Endothelial cell of umbilical vein (primary cell): ENCODE measurements at regions of chr3 and their contacts with region 1.

Region 1: GRCh38 chr3:139389458-139390209 is at the start of gene COPB2:
- DNase-seq: peak; percentile 100
- H3K4me3 ChIP-seq: peak within 1 kb of the TSS; percentile 60 to 100 (median 98)
- H3K27ac ChIP-seq: peak within 1 kb of the TSS; percentile 86
- H3K4me1 ChIP-seq: peaks cover 5% of the 10 kb centered on the region
- H3K27me3 ChIP-seq: peaks cover 5 to 10% of the 10 kb centered on the region in 2 experiments
- CTCF ChIP-seq: no peak
- POLR2A ChIP-seq: peak; percentile 73
- total RNA-seq, gene COPB2: 137 and 146 TPM in 2 replicates

Region 2: DNA sequence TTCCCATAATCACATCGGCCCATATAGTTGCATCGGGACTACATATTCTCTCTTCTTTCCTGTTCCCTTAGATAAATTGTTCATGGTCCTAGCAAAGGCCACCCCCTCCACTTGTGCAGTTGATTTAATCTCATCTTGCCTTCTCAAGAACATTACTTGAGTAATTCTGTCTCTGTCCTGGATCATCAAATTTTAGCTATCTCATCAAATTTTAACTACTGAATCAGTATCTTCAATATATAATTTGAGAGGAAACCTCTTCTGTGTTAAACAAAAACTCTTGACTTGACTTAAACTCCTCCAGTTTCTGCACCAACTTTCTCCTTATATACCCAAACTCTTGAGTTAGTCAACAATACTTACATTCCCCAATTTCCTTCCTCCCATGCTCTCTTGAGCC is 364.7 kb before region 1 on chr3:
- CTCF ChIA-PET with region 1: no interaction called
- POLR2A ChIA-PET with region 1: no interaction called
- dilution Hi-C with region 1: no loop called
- intact Hi-C with region 1: no loop called
- DNase-seq: no peak
- H3K4me3 ChIP-seq: no peak overlapping the region
- H3K27ac ChIP-seq: no peak overlapping the region
- H3K4me1 ChIP-seq: no peaks in the 10 kb centered on the region
- H3K27me3 ChIP-seq: no peaks in the 10 kb centered on the region
- CTCF ChIP-seq: no peak
- POLR2A ChIP-seq: no peak

Region 3: DNA sequence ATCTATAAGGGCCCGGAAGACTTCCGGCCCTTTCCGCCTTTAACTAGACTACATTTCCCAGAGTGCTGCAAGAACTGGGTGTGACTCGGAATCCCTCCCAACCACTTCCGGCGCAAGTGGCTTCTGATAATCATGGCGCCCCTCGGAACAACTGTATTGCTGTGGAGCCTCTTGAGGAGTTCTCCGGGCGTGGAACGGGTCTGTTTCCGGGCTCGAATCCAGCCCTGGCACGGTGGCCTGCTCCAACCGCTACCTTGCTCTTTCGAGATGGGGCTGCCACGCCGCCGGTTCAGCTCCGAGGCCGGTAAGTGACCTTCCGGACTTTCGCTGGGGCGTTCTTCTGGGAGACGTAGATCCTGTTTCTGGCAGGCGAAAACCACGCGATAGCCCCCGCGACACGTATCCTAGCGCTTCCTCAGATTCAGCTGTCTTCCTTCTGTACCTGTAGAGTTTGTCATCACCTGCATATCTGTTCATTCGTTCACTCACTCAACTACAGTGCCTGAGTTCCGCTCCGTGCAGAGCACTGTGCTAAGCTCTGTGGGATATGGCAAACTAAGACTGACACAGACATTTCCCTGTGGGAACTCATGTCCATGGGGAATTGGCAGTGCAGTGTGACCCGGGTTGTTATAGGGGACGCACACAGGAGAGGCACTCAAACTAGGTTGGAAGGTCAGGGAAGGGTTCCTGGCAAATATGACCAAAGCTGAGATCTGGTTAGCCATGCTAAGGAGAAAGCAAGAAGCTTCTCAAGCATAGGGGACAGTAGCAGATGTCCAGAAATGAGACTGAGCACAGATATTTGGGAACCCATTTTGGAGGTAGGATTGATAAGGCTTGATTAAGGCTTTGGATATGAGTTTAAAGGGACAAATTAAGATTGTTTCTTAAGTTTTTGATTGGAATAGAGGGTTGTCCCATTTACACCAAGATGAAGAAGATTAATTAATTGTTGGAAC is 45.5 kb before region 1 on chr3 and contains the start of gene MRPS22:
- CTCF ChIA-PET with region 1: no interaction called
- POLR2A ChIA-PET with region 1: interaction called, 4 read pairs
- dilution Hi-C with region 1: no loop called
- intact Hi-C with region 1: loop called (anchors 1 kb)
- DNase-seq: peak; percentile 94
- H3K4me3 ChIP-seq: peak within 1 kb of the TSS; percentile 5 to 77 (median 60)
- H3K27ac ChIP-seq: peak within 1 kb of the TSS; percentile 70
- H3K4me1 ChIP-seq: peaks cover 7% of the 10 kb centered on the region
- H3K27me3 ChIP-seq: peaks cover 0 to 13% of the 10 kb centered on the region in 2 experiments
- CTCF ChIP-seq: no peak
- POLR2A ChIP-seq: peak; percentile 63
- total RNA-seq, gene MRPS22: 41.0 and 45.6 TPM in 2 replicates

Region 4: GRCh38 chr3:139353920-139354556 is 35.6 kb before region 1 on chr3:
- CTCF ChIA-PET with region 1: interaction called, 16 read pairs
- POLR2A ChIA-PET with region 1: interaction called, 3 read pairs
- dilution Hi-C with region 1: no loop called
- intact Hi-C with region 1: no loop called
- DNase-seq: peak; percentile 65
- H3K4me3 ChIP-seq: no peak overlapping the region
- H3K27ac ChIP-seq: no peak overlapping the region
- H3K4me1 ChIP-seq: no peaks in the 10 kb centered on the region
- H3K27me3 ChIP-seq: no peaks in the 10 kb centered on the region
- CTCF ChIP-seq: peak; percentile 69 to 77
- POLR2A ChIP-seq: no peak

Region 5: DNA sequence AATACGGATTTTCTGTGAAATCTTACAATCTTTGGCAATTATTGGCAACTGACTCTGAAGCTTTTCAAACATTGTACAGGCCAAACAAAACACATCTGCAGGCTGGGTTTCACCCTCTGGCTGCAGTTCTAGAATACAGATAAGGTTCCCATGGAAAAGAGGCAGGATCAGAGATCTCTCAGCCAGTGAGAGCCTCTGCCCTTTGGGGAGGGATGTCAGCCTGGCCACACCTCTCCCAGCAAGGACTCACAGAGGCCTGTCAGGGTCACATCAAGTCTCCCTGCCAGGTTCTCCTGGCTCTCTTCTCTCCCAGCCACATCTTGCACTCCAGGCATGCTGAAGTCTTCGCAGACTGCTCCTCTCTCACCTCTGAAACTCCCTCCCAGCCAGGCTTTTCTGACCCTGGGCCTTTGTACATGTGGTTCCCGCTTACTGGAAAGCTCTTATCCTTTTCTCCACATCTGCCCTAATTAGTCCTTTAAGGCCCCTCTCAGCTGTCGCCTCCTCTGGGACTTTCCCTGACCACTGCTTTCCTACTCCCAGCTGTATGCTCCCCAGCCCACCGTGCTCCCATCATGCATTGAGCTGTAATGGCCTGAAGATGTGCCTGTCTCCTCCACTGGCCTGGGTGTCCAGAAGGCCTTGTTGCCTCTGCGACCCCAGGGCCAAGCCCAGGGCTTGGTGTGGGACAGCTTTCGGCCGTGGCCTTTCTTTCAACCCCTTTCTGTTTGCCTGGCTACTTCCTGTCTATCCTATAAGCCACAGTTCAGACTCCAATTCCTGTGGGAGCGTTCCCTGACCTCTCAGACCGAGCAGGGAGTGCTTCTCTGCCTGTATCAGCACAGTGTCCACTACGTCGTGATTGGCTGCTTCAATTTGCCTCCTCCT is 145.6 kb after region 1 on chr3:
- CTCF ChIA-PET with region 1: no interaction called
- POLR2A ChIA-PET with region 1: no interaction called
- dilution Hi-C with region 1: no loop called
- intact Hi-C with region 1: loop called (anchors 5 kb)
- DNase-seq: peak; percentile 90
- H3K4me3 ChIP-seq: no peak overlapping the region
- H3K27ac ChIP-seq: no peak overlapping the region
- H3K4me1 ChIP-seq: peaks cover 11% of the 10 kb centered on the region
- H3K27me3 ChIP-seq: peaks cover 0 to 1% of the 10 kb centered on the region in 2 experiments
- CTCF ChIP-seq: no peak
- POLR2A ChIP-seq: no peak

Region 6: GRCh38 chr3:139830817-139831216 is 441.2 kb after region 1 on chr3:
- CTCF ChIA-PET with region 1: no interaction called
- POLR2A ChIA-PET with region 1: no interaction called
- dilution Hi-C with region 1: no loop called
- intact Hi-C with region 1: no loop called
- DNase-seq: no peak
- H3K4me3 ChIP-seq: no peak overlapping the region
- H3K27ac ChIP-seq: no peak overlapping the region
- H3K4me1 ChIP-seq: no peaks in the 10 kb centered on the region
- H3K27me3 ChIP-seq: no peaks in the 10 kb centered on the region
- CTCF ChIP-seq: no peak
- POLR2A ChIP-seq: no peak

Region 7: GRCh38 chr3:140941434-140942220 is 1552.0 kb after region 1 on chr3 and contains the start of gene SLC25A36:
- CTCF ChIA-PET with region 1: no interaction called
- POLR2A ChIA-PET with region 1: no interaction called
- dilution Hi-C with region 1: no loop called
- intact Hi-C with region 1: loop called (anchors 1 kb)
- DNase-seq: peak; percentile 98
- H3K4me3 ChIP-seq: peak within 1 kb of the TSS; percentile 68 to 98 (median 96)
- H3K27ac ChIP-seq: peak within 1 kb of the TSS; percentile 80
- H3K4me1 ChIP-seq: peaks cover 11% of the 10 kb centered on the region
- H3K27me3 ChIP-seq: no peaks in the 10 kb centered on the region
- CTCF ChIP-seq: no peak
- POLR2A ChIP-seq: peak; percentile 41
- total RNA-seq, gene SLC25A36: 37.4 and 38.8 TPM in 2 replicates